ENCODE measurements at regions of chr1 and their contacts with region 1.

Region 1: GRCh38 chr1:161749509-161750407 is at the start of gene DUSP12:
- DNase-seq: peak; percentile 93 to 94
- ATAC-seq: peak; percentile 99
- total RNA-seq, gene DUSP12: 13.3 to 17.4 TPM

Region 2: GRCh38 chr1:161399257-161399998 is 350.3 kb before region 1 on chr1:
- intact Hi-C with region 1: no loop called
- DNase-seq: peak; percentile 84 to 88
- ATAC-seq: peak; percentile 81

Region 3: DNA sequence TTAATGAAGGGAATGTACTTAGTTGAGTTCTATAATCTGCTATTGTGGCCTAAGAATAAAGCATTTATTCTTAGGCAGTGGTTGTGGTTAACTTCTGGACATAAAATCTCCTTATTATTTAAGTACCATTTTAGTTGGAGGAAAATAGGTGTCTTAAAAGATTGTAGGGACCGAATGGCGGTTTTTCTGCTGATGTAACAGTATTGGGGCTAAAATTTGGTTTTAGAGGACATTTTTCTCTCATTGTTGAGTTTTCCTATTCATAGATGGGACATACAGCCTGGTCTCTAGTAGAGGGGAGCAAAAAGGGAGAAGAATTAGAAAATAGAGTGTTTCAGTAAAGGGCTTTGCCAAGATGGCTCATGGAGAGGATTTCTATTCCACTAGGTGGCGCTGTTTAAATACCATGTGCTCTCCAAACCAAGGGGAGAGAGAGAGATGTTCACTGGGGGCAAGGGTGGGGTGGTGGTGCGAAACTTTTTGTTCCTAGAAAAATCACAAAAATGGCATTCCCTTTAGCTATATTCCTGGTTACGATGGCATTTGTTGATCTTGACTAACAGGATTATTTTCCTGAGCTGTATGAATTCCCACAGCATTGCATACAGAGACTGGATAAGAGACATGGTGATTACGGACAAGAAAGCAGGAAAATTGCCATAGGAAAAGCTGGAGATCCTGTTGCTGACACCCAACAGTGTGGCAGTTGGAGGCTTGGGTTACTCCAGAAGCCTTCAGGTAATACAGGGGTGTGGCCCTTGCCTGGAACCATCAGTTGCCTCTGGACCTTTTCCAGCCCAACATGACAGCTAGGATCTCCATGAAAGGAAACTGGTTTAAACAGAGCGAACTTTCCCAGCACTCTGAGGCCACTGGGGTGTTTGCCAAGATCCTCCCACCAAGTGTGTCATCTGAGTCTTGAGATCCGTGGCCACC is 262.7 kb before region 1 on chr1:
- intact Hi-C with region 1: loop called in 1 of 2 experiments (anchors 10 kb)
- DNase-seq: peak in 1 of 2 donors; percentile 28
- ATAC-seq: peak; percentile 62

Region 4: GRCh38 chr1:161843156-161843555 is 93.4 kb after region 1 on chr1:
- intact Hi-C with region 1: no loop called
- DNase-seq: no peak
- ATAC-seq: no peak

Region 5: GRCh38 chr1:161915051-161915503 is 165.3 kb after region 1 on chr1:
- intact Hi-C with region 1: no loop called
- DNase-seq: no peak
- ATAC-seq: no peak

Measured in left colon (tissue), 2 donors.